PC-3 (cell line): ENCODE measurements at regions of chr3 and their contacts with region 1.

Region 1: GRCh38 chr3:149657926-149658733 is at the start of gene WWTR1:
- DNase-seq: peak; percentile 97
- ATAC-seq: peak; percentile 68
- H3K4me3 ChIP-seq: peak within 1 kb of the TSS; percentile 98
- H3K27ac ChIP-seq: peak within 1 kb of the TSS; percentile 95
- H3K4me1 ChIP-seq: peaks cover 39% of the 10 kb centered on the region
- H3K27me3 ChIP-seq: no peaks in the 10 kb centered on the region
- CTCF ChIP-seq: 0 out of 2 replicates have a peak, but pooled peaks have one; percentile 27
- total RNA-seq, gene WWTR1: 74.4 and 79.7 TPM in 2 replicates

Region 2: DNA sequence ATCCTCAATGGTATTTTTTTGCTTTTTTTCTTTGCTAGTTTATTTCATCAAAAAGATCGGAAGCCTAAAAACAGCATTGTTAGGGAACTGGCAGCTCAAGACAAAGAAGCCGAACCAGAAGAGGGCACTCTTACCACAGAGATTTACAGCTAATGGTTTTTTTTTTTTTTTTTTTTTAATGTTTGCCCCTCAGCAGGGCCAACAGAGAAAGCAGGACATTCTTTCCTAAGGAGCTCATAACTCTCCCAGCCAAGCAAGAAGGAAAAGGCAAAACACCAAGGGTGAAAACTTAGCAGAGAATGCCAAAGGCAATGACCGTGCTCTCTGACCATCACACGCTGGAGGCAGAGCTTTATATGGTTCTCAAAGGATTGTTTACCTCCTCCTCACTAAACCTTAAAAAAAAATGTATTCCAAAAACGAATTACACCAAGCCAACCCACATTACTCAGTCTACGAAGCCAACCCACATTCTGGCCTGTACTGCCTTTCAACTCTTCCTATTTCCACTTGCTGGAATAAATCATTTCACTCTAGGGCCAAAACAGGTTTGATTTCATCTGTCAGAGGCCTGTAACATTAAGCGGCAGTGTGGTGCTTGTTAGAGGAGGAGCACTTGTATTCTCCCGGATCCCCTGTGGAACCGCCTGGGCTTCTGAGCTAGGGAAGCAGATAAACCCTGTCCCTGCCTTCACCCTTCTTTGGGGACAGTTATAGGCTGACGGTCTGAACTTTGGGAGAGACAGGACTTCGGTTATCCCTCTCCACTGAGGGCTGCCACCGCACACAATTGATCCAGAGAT is 702.4 kb before region 1 on chr3:
- CTCF ChIA-PET with region 1: no interaction called
- POLR2A ChIA-PET with region 1: no interaction called
- intact Hi-C with region 1: no loop called
- DNase-seq: peak; percentile 68
- ATAC-seq: peak; percentile 53
- H3K4me3 ChIP-seq: peak overlapping the region; percentile 29; the same call in 1 of the 2 replicates
- H3K27ac ChIP-seq: no peak overlapping the region
- H3K4me1 ChIP-seq: peaks cover 17% of the 10 kb centered on the region
- H3K27me3 ChIP-seq: no peaks in the 10 kb centered on the region
- CTCF ChIP-seq: peak; percentile 87

Region 3: DNA sequence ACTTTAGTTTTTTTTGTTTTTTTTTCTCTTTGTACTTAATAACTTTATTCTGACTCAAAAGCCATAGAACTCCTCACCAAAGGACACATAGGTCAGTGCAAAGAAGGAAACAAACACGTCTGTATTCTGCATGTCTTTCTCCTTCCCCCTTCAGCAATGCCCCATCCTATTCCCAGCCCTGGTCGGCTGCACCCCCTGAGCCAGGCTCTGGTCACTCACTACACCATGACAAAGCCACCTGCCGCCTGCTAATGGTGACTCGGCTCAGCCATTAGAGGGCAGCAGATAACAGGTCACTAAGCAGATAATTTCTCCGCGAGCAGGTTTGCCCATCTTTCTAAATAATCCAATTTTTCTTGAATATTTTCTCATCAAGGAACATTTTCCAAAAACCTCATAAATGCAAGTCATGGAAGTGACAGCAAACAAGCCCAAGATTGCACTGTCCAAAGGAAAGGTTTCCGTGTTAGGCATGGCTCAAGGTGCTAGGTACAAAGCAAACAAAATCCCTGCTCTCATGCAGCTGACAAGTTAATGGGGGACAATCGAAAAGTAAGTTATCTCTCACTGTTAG is 145.8 kb before region 1 on chr3:
- CTCF ChIA-PET with region 1: no interaction called
- POLR2A ChIA-PET with region 1: no interaction called
- intact Hi-C with region 1: loop called (anchors 5 kb)
- DNase-seq: peak; percentile 84
- ATAC-seq: peak; percentile 90
- H3K4me3 ChIP-seq: no peak overlapping the region
- H3K27ac ChIP-seq: no peak overlapping the region
- H3K4me1 ChIP-seq: peaks cover 7% of the 10 kb centered on the region; the same call in 1 of the 2 replicates
- H3K27me3 ChIP-seq: no peaks in the 10 kb centered on the region
- CTCF ChIP-seq: peak; percentile 98

Region 4: DNA sequence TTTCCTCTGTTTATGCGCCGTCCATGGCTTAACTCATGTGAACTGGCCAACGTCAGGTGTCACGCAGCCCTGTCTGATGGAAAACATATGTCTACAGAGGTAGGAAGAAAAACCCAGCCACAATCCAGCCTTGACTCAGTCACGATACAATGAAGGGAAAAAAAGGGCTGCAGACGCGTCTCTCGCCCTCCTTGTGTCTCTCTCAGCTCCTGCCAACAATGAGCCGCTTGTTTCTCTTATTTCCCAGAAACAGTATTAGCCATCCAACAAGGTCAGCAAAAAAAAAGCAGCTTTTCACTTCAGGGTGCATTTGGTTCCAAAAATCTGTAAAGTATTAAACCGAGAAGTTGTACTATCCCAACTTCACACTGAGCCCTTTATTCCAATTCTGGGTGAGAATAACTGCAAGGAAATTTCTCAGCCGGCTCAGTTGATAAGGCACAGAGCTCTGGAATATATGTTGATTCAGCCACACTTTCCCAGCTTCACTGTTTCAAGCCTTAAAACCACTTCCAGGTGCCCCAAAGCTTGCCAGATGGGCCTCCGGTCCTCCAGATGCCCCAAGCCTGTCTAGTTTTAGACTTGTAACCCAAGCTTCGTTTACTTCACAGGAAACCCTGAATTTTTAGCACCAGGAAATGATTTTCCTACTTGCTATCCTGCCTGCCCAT is 104.2 kb before region 1 on chr3:
- CTCF ChIA-PET with region 1: interaction called, 3 read pairs
- POLR2A ChIA-PET with region 1: interaction called, 3 read pairs
- intact Hi-C with region 1: loop called (anchors 1 kb)
- DNase-seq: no peak
- ATAC-seq: no peak
- H3K4me3 ChIP-seq: peak overlapping the region; percentile 16; the same call in 1 of the 2 replicates
- H3K27ac ChIP-seq: peak overlapping the region; percentile 93
- H3K4me1 ChIP-seq: peaks cover 51% of the 10 kb centered on the region
- H3K27me3 ChIP-seq: no peaks in the 10 kb centered on the region
- CTCF ChIP-seq: no peak

Region 5: DNA sequence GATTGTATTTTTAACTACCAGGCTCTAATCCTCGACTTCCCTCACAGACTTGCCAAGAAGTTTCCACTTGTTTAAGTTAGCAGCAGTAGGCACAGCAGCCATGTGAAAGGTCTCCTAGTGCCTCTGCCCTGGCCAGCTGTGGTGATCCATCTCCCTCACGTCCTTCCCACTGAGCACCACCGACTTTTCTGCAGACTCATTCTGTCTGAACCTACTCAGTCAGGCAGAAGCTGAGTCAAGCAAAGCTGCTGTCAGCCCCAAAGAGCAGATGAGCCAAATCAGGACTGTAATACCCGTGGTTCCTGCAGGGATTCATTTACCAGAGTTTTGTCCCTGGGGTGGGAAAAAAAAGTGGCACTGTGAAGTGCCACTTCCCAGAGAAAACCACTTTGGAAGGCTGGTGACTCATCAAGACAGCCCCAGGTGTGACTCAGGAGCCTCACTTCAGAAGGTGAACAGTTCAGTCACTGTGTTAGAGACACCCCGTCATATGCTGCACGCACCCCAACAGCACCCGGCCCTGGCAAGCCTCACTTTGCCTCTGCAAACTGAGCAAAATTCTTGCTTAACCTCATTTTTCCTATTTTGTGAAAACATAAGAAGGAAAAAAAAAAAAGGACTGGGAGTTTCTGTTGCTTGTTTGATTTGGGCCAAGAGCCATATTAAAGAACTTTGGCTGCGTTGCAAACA is 76.3 kb before region 1 on chr3:
- CTCF ChIA-PET with region 1: interaction called, 3 read pairs
- POLR2A ChIA-PET with region 1: interaction called, 36 read pairs
- intact Hi-C with region 1: loop called (anchors 1 kb)
- DNase-seq: peak; percentile 97
- ATAC-seq: peak; percentile 40
- H3K4me3 ChIP-seq: peak overlapping the region; percentile 53
- H3K27ac ChIP-seq: peak overlapping the region; percentile 99
- H3K4me1 ChIP-seq: peaks cover 91% of the 10 kb centered on the region
- H3K27me3 ChIP-seq: no peaks in the 10 kb centered on the region
- CTCF ChIP-seq: no peak

Region 6: GRCh38 chr3:149678365-149678948 is 20.3 kb after region 1 on chr3:
- CTCF ChIA-PET with region 1: no interaction called
- POLR2A ChIA-PET with region 1: no interaction called
- intact Hi-C with region 1: loop called (anchors 1 kb)
- DNase-seq: peak; percentile 98
- ATAC-seq: peak; percentile 100
- H3K4me3 ChIP-seq: no peak overlapping the region
- H3K27ac ChIP-seq: peak overlapping the region; percentile 57
- H3K4me1 ChIP-seq: peaks cover 11% of the 10 kb centered on the region
- H3K27me3 ChIP-seq: no peaks in the 10 kb centered on the region
- CTCF ChIP-seq: no peak

Region 7: GRCh38 chr3:149717391-149718056 is 59.4 kb after region 1 on chr3:
- CTCF ChIA-PET with region 1: no interaction called
- POLR2A ChIA-PET with region 1: interaction called, 4 read pairs
- intact Hi-C with region 1: loop called (anchors 1 kb)
- DNase-seq: peak; percentile 88
- ATAC-seq: peak; percentile 83
- H3K4me3 ChIP-seq: no peak overlapping the region
- H3K27ac ChIP-seq: no peak overlapping the region
- H3K4me1 ChIP-seq: peaks cover 5% of the 10 kb centered on the region; the same call in 1 of the 2 replicates
- H3K27me3 ChIP-seq: no peaks in the 10 kb centered on the region
- CTCF ChIP-seq: peak; percentile 89

Region 8: GRCh38 chr3:150555859-150556436 is 897.8 kb after region 1 on chr3:
- CTCF ChIA-PET with region 1: no interaction called
- POLR2A ChIA-PET with region 1: no interaction called
- intact Hi-C with region 1: no loop called
- DNase-seq: no peak
- ATAC-seq: no peak
- H3K4me3 ChIP-seq: no peak overlapping the region
- H3K27ac ChIP-seq: no peak overlapping the region
- H3K4me1 ChIP-seq: no peaks in the 10 kb centered on the region
- H3K27me3 ChIP-seq: no peaks in the 10 kb centered on the region
- CTCF ChIP-seq: no peak